ENCODE measurements at regions of chr3 and their contacts with region 1.

Region 1: GRCh38 chr3:24128195-24129005 is 183.3 kb downstream of the NR1D2 start:
- DNase-seq: no peak
- H3K4me3 ChIP-seq: no peak overlapping the region
- H3K27ac ChIP-seq: peak overlapping the region in 5 of 59 donors; percentile 10 to 46 (median 20)
- H3K27me3 ChIP-seq: no peaks in the 10 kb centered on the region
- CTCF ChIP-seq: no peak

Region 2: DNA sequence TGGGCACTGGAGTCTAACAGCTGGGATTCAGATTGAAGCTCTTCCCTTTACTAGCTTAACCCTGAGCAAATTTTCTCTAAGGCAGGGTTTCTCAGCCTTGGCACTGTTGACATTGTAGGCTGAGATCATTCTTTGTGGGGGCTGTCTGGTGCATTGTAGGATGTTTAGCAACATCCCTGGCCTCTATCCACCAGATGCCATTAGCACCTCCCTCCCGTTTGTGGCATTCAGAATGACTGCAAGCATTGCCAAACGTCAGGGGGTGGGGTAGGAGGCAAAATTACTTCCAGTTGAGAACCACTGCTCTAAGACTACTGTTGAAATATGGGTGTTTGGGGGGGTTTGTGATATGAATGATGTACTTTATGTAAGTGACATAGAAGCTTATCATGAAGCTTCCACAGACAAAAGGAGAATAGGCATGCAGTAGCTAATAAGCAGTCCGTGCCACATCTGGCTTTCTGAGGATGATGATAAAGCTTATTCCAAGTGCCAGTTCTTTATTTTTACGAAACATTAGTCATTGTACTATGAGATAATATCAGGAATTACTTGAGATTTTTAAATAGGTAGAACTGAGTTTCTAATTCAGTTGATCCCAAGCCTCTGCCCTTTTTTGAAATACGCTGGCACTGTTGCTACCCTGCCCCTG is 250.9 kb before region 1 on chr3:
- intact Hi-C with region 1: no loop called
- DNase-seq: no peak
- H3K4me3 ChIP-seq: no peak overlapping the region
- H3K27ac ChIP-seq: peak overlapping the region in 23 of 59 donors; percentile 3 to 52 (median 17)
- H3K27me3 ChIP-seq: no peaks in the 10 kb centered on the region
- CTCF ChIP-seq: no peak

Region 3: GRCh38 chr3:24017305-24017704 is 111.1 kb before region 1 on chr3:
- intact Hi-C with region 1: no loop called
- DNase-seq: no peak
- H3K4me3 ChIP-seq: no peak overlapping the region
- H3K27ac ChIP-seq: no peak overlapping the region
- H3K27me3 ChIP-seq: no peaks in the 10 kb centered on the region
- CTCF ChIP-seq: no peak

Region 4: GRCh38 chr3:24042174-24043059 is 86.0 kb before region 1 on chr3:
- intact Hi-C with region 1: loop called in 1 of 2 experiments (anchors 10 kb)
- DNase-seq: peak in 1 of 10 donors; percentile 24
- H3K4me3 ChIP-seq: peak overlapping the region in 33 of 59 donors; percentile 2 to 36 (median 19)
- H3K27ac ChIP-seq: peak overlapping the region in 58 of 59 donors; percentile 51 to 93 (median 81)
- H3K27me3 ChIP-seq: no peaks in the 10 kb centered on the region
- CTCF ChIP-seq: no peak

Measured in dorsolateral prefrontal cortex (tissue), 120 donors.